CD8-positive, alpha-beta T cell (primary cell): ENCODE measurements at regions of chr6 and their contacts with region 1.

Region 1: GRCh38 chr6:158448856-158449255 is 111.0 kb upstream of the TMEM181 start:
- DNase-seq: no peak
- ATAC-seq: no peak
- H3K4me3 ChIP-seq: no peak overlapping the region
- H3K4me3 Mint-ChIP-seq: no peak overlapping the region
- H3K27ac ChIP-seq: no peak overlapping the region
- H3K27ac Mint-ChIP-seq: no peak overlapping the region
- H3K4me1 ChIP-seq: no peaks in the 10 kb centered on the region
- H3K4me1 Mint-ChIP-seq: no peaks in the 10 kb centered on the region
- H3K27me3 ChIP-seq: no peaks in the 10 kb centered on the region
- H3K27me3 Mint-ChIP-seq: no peaks in the 10 kb centered on the region
- CTCF ChIP-seq: no peak

Region 2: GRCh38 chr6:158207422-158207788 is 241.5 kb before region 1 on chr6:
- CTCF ChIA-PET with region 1: no interaction called
- POLR2A ChIA-PET with region 1: no interaction called
- intact Hi-C with region 1: no loop called
- DNase-seq: no peak
- ATAC-seq: no peak
- H3K4me3 ChIP-seq: no peak overlapping the region
- H3K4me3 Mint-ChIP-seq: no peak overlapping the region
- H3K27ac ChIP-seq: no peak overlapping the region
- H3K27ac Mint-ChIP-seq: no peak overlapping the region
- H3K4me1 ChIP-seq: no peaks in the 10 kb centered on the region
- H3K4me1 Mint-ChIP-seq: peaks cover 7% of the 10 kb centered on the region
- H3K27me3 ChIP-seq: no peaks in the 10 kb centered on the region
- H3K27me3 Mint-ChIP-seq: peaks cover 8% of the 10 kb centered on the region
- CTCF ChIP-seq: no peak

Region 3: GRCh38 chr6:158460602-158461169 is 11.8 kb after region 1 on chr6:
- CTCF ChIA-PET with region 1: no interaction called
- POLR2A ChIA-PET with region 1: interaction called, 12 read pairs
- intact Hi-C with region 1: no loop called
- DNase-seq: no peak
- ATAC-seq: no peak
- H3K4me3 ChIP-seq: no peak overlapping the region
- H3K4me3 Mint-ChIP-seq: no peak overlapping the region
- H3K27ac ChIP-seq: no peak overlapping the region
- H3K27ac Mint-ChIP-seq: no peak overlapping the region
- H3K4me1 ChIP-seq: no peaks in the 10 kb centered on the region
- H3K4me1 Mint-ChIP-seq: no peaks in the 10 kb centered on the region
- H3K27me3 ChIP-seq: no peaks in the 10 kb centered on the region
- H3K27me3 Mint-ChIP-seq: no peaks in the 10 kb centered on the region
- CTCF ChIP-seq: no peak